ENCODE measurements at regions of chr10 and their contacts with region 1.

Region 1: GRCh38 chr10:28250782-28251181 is 52.1 kb downstream of the MPP7 start:
- DNase-seq: no peak
- ATAC-seq: no peak
- H3K4me3 Mint-ChIP-seq: no peak overlapping the region
- H3K27ac Mint-ChIP-seq: no peak overlapping the region
- H3K4me1 Mint-ChIP-seq: peaks cover 4% of the 10 kb centered on the region
- H3K27me3 Mint-ChIP-seq: no peaks in the 10 kb centered on the region

Region 2: GRCh38 chr10:28111712-28112111 is 139.1 kb before region 1 on chr10:
- CTCF ChIA-PET with region 1: no interaction called
- DNase-seq: no peak
- ATAC-seq: no peak
- H3K4me3 Mint-ChIP-seq: no peak overlapping the region
- H3K27ac Mint-ChIP-seq: no peak overlapping the region
- H3K4me1 Mint-ChIP-seq: no peaks in the 10 kb centered on the region
- H3K27me3 Mint-ChIP-seq: no peaks in the 10 kb centered on the region

Region 3: DNA sequence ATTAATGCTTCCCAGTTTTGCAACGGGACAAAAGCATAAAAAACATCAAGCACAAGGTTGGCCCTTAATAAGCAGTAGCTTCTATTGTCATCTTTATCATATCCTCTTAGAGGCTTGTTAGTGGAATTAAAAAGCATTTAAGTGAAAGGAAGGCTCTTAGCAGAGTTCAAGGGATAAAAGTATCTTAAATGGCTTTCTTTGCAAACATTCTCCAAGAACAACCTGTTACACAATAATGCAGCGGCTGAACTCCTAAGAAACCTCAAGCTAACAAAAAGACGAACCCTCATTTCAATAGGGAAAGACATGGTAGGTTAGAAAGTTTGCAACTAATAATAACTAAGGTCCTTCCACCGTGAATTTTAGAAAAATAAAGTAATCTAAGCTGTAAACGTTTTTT is 30.0 kb before region 1 on chr10:
- CTCF ChIA-PET with region 1: no interaction called
- DNase-seq: no peak
- ATAC-seq: no peak
- H3K4me3 Mint-ChIP-seq: no peak overlapping the region
- H3K27ac Mint-ChIP-seq: no peak overlapping the region
- H3K4me1 Mint-ChIP-seq: peaks cover 6% of the 10 kb centered on the region
- H3K27me3 Mint-ChIP-seq: no peaks in the 10 kb centered on the region

Region 4: GRCh38 chr10:28393966-28394568 is 143.3 kb after region 1 on chr10:
- CTCF ChIA-PET with region 1: interaction called, 21 read pairs
- DNase-seq: peak; percentile 67
- ATAC-seq: peak; percentile 81
- H3K4me3 Mint-ChIP-seq: no peak overlapping the region
- H3K27ac Mint-ChIP-seq: no peak overlapping the region
- H3K4me1 Mint-ChIP-seq: peaks cover 4% of the 10 kb centered on the region
- H3K27me3 Mint-ChIP-seq: no peaks in the 10 kb centered on the region